GM18951 (cell line): ENCODE measurements at regions of chr1 and their contacts with region 1.

Region 1: DNA sequence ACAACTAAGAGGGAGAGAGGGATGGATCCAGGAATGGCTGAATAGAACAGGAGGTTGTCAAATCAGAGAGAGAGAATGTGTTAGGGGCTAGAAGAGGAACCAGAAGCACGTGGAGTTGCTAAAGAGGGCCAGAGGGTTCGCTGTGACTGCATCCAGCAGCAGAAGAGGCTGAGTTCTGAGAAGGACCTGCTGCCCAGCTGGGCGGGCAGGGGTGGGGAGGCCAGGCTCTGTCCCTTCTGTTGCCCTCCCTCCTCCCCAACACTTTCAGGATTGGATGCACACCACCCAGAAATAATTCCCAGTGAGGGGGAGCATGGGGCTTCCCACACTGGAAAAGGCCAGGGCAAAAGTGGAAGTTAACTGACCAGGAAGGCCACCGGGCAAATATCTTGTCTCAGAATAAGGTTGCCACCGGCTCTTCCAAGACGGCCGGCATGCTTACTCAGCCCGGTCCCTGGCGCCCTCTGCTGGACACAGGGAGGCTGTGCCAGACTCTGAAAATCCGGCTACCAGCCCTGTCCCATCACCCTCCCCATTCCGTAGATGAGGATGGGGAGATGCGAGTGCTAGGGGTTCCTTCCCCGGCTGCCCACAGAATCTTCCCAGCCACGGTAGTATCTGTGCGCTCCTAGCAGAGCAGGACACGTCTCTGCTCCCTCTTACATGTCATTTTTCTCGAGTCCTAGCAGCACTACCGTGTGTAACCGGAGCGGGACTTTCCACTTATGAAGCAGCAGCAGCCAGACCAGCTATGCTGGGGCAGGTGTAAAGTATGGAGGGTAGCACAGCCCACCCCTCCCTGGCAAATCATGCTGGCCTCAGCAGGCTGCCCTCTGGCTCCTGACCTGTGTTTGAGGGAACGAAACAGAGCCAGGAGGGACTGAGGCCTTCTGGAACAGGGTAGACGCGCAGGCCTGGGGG is 46.8 kb upstream of the A3GALT2 start:
- POLR2A ChIP-seq: no peak

Region 2: GRCh38 chr1:33472349-33472980 is 104.7 kb after region 1 on chr1 and contains the start of gene ZSCAN20:
- in situ Hi-C with region 1: loop called (anchors 10 kb)
- POLR2A ChIP-seq: peak; percentile 64